Common myeloid progenitor, CD34-positive (primary cell): ENCODE measurements at regions of chr17 and their contacts with region 1.

Region 1: DNA sequence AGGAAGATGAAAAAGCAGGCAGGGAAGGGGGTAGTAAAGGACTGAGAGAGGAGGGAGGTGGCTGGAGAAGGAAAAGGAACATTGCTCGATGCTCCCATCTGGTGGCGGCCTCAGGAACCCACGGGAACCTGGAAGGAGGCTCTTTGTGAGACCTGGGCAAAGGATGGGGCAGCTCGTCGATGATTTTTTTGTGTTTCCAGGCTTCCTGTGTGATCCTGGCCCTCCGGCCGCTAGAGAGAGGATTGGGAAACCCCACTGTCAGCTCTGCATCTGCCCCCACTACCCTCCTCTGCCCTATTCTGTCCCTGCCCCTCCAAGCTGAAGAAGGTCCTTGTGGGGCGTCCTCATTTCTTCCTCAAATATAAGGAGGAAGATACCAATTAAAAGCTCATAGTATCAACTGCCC is 6.6 kb downstream of the WFIKKN2 start:
- DNase-seq: peak; percentile 55 to 78 (median 71)
- H3K4me3 ChIP-seq: no peak overlapping the region
- H3K27ac ChIP-seq: no peak overlapping the region
- H3K4me1 ChIP-seq: peaks cover 0 to 3% (median 0%) of the 10 kb centered on the region in 4 experiments
- H3K27me3 ChIP-seq: no peaks in the 10 kb centered on the region

Region 2: DNA sequence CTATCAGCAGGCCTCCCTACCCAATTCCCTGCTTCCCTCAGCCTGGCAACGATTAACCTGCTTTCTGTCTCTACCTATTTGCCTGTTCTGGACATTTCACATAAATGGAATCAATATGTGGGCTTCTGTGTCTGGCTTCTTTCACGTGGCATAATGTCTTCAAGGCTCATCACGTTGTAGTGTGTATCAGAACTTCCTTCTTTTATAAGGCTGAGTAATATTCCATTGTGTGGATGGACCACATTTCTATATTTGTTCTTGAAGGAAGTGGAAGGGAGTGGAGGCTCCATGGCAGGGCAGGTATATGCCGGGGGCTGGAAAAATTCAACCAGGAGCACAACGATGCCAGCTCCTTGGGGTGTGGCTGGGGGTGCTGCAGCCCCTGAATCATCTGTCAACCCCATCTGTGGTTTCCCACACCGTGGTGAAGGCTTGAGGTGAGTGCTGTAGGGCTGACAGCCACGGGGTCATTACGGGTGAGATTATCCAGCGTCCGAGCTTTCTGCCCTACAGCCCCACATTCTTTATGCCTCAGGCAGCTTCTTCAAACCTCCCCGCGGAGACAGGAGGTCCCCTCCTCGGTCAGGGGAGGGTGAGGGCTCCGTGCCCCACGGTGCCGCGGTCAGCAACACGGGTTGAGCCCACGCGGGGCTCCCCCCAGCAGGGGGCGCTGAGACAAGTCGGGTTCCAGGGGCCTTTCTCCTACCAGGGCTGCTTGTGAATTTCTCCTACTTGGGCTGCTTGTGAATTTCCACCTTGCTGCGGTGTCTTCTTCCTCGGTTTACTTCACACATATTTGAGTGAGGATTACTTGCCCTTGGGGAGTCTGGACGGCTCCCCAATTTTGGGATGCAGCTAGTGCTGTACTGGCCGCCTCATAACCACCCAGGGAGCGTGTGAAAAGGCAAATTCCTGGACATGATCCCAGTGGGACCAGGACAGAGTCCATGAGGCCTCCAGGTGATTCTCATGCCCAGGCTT is 24.9 kb before region 1 on chr17:
- CTCF ChIA-PET with region 1: interaction called, 21 read pairs
- POLR2A ChIA-PET with region 1: no interaction called
- DNase-seq: peak; percentile 43 to 61 (median 51)
- H3K4me3 ChIP-seq: peak overlapping the region in 3 of 7 experiments; percentile 33 to 61 (median 44)
- H3K27ac ChIP-seq: no peak overlapping the region
- H3K4me1 ChIP-seq: peaks cover 0 to 11% (median 6%) of the 10 kb centered on the region in 4 experiments
- H3K27me3 ChIP-seq: no peaks in the 10 kb centered on the region

Region 3: GRCh38 chr17:50828508-50829170 is 13.3 kb before region 1 on chr17:
- CTCF ChIA-PET with region 1: interaction called, 58 read pairs
- POLR2A ChIA-PET with region 1: no interaction called
- DNase-seq: peak in 1 of 3 donors; percentile 26
- H3K4me3 ChIP-seq: peak overlapping the region in 3 of 7 experiments; percentile 24 to 26 (median 25)
- H3K27ac ChIP-seq: peak overlapping the region; percentile 17 to 47
- H3K4me1 ChIP-seq: peaks cover 0 to 45% (median 42%) of the 10 kb centered on the region in 4 experiments
- H3K27me3 ChIP-seq: no peaks in the 10 kb centered on the region